ENCODE measurements at regions of chr20 and their contacts with region 1.

Region 1: GRCh38 chr20:653590-654416 is 803 bp upstream of the SRXN1 start:
- DNase-seq: no peak

Region 2: GRCh38 chr20:642398-643174 is 11.2 kb before region 1 on chr20:
- CTCF ChIA-PET with region 1: no interaction called
- POLR2A ChIA-PET with region 1: no interaction called
- DNase-seq: no peak

Region 3: DNA sequence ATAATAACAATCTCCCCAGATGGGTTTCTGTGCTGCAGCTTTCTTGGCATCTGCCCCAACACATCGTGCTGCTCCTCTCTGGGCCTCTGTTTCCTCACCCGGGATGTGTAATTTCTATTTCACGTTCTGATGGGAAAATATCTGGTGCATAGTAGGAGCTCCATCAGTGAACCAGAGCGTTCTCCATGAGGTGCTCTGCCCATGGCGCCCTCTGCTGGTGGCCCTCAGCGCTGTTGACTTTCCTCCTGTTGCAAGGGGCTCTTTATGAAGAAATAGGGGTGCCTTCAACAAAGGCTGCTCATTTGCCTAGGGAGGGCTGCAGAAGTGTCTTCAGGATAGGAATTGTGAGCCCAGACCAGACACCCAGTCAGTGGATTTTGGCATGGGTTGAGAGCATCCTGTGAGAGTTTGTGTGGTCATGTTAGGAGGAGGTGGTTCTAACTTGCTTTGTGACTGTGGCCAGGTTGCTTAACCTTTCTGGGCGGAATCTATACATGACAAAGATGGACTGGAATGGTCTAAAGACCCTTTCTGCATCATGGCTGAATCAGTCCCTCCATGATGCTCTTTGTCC is 13.7 kb after region 1 on chr20:
- CTCF ChIA-PET with region 1: interaction called, 23 read pairs
- POLR2A ChIA-PET with region 1: no interaction called
- DNase-seq: peak; percentile 64

Region 4: GRCh38 chr20:868279-868678 is 214.5 kb after region 1 on chr20:
- CTCF ChIA-PET with region 1: no interaction called
- POLR2A ChIA-PET with region 1: no interaction called
- DNase-seq: no peak

Measured in HEK293T (cell line).